Posterior vena cava (tissue), 2 donors: ENCODE measurements at regions of chr5 and their contacts with region 1.

Region 1: GRCh38 chr5:16065831-16066230 is 113.8 kb downstream of the MARCHF11 start:
- DNase-seq: no peak

Region 2: DNA sequence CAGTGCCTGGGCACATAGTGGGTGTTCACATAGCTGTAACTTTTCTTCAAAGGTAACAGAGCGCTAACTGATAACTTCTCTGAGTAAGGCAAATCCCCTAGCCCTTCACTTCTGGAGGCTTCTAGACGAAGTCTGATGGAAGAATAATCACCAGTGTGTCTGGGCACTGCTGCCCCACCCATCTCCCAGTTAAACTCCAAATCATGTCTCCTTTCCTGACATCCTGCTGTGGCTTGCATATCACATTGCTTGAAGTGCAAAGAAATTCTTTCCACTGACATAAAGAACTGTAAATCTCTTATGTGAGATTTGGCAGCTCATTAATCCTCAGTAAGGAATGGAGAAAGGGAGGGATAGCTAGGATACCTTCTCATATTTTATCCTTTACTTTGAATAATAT is 39.1 kb after region 1 on chr5:
- intact Hi-C with region 1: loop called in 1 of 2 experiments (anchors 1 kb)
- DNase-seq: no peak

Region 3: GRCh38 chr5:16143381-16144049 is 77.7 kb after region 1 on chr5:
- intact Hi-C with region 1: no loop called
- DNase-seq: no peak